ENCODE measurements at regions of chr1 and their contacts with region 1.

Region 1: GRCh38 chr1:178931858-178932551 is 61.1 kb upstream of the ANGPTL1 start:
- DNase-seq: peak; percentile 97
- H3K4me3 ChIP-seq: peak overlapping the region in 1 of 4 donors; percentile 13
- H3K27ac ChIP-seq: peak overlapping the region; percentile 81 to 92 (median 90)
- H3K4me1 ChIP-seq: peaks cover 55 to 95% (median 92%) of the 10 kb centered on the region in 4 donors
- H3K27me3 ChIP-seq: no peaks in the 10 kb centered on the region
- CTCF ChIP-seq: no peak
- EP300 ChIP-seq: peak; percentile 96
- POLR2A ChIP-seq: no peak

Region 2: GRCh38 chr1:178870944-178871343 is 61.1 kb before region 1 on chr1 and contains the start of gene ANGPTL1:
- intact Hi-C with region 1: loop called (anchors 5 kb)
- DNase-seq: no peak
- H3K4me3 ChIP-seq: peak within 1 kb of the TSS; percentile 45 to 59 (median 58)
- H3K27ac ChIP-seq: peak within 1 kb of the TSS; percentile 74 to 82 (median 78)
- H3K4me1 ChIP-seq: peaks cover 0 to 35% (median 31%) of the 10 kb centered on the region in 4 donors
- H3K27me3 ChIP-seq: no peaks in the 10 kb centered on the region
- CTCF ChIP-seq: no peak
- EP300 ChIP-seq: no peak
- POLR2A ChIP-seq: no peak
- total RNA-seq, gene ANGPTL1: 149 to 206 (median 172) TPM

Region 3: DNA sequence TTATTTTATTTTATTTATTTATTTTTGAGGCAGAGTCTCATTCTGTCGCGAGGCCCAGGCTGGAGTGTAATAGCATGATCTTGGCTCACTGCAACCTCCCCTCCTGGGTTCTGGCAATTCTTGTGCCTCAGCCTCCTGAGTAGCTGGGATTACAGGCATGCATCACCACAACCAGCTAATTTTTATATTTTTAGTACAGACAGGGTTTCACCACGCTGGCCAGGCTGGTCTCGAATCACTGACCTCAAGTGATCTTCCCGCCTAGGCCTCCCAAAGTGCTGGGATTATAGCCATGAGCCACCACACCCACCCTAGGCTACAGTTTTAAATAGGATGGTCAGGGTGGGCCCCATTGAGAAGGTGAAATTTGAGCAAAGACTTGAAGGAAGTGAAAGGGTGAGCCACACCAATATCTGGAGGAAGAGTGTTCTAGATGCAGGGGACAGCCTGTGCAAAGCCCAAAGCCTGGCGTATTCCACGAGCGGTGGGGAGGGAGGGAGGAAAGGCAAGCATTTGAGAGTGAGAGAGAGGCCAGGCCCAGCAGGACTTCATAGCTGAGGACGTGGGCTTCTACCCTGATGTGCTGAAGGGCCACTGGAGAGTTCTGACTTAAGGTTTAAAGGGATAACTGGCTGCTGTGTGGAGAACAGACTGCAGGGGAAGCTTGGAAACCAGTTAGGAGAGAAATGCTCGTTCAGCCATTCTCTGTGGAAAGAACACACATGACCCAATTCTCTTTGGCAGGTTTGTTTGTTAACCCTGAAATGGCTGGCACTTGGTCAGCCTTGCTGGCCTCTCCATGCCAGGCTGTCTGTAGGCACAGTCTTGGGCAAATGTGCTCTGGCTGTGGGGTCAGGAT is 31.1 kb after region 1 on chr1:
- intact Hi-C with region 1: no loop called
- DNase-seq: no peak
- H3K4me3 ChIP-seq: no peak overlapping the region
- H3K27ac ChIP-seq: no peak overlapping the region
- H3K4me1 ChIP-seq: peaks cover 6 to 24% (median 18%) of the 10 kb centered on the region in 4 donors
- H3K27me3 ChIP-seq: no peaks in the 10 kb centered on the region
- CTCF ChIP-seq: no peak
- EP300 ChIP-seq: no peak
- POLR2A ChIP-seq: no peak

Measured in esophagus muscularis mucosa (tissue), 4 donors.